ENCODE measurements at regions of chr5 and their contacts with region 1.

Region 1: DNA sequence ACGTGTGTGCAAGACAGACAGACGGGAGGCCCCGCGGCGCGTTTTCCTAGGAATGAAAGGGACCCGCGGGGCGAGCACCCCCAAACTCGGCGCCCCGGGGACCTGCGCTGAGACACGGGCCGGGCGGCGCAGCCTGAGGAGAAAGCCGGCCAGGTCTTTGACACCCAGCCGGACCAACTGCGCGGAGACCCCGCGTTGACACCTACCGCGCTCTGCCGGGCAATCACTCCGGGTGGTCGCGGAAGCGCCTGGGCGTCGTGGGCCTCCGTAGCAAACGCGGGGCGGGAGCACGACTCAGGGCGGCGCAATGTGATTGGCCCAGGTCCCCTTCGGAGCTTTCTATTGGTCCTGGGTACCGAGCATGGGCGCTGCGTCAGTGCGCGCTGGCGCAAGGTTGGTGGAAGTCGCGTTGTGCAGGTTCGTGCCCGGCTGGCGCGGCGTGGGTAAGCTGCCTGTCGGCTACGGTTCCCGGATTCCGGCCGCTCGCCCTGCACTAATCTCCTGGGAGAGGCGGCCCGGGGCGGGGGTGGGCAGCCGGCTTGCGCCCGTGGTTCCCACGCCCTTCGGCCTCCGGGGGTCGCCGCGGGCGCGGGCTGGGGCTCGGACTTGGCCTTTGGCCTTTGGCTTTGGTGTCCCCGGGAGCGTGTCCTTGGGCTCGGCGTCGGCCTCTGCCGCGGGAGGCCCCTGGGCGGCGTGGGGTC is at the starts of genes FASTKD3 and MTRR:
- DNase-seq: peak; percentile 86 to 93
- H3K4me3 ChIP-seq: peak within 1 kb of the TSS; percentile 88
- H3K4me1 ChIP-seq: peaks cover 15% of the 10 kb centered on the region
- H3K27me3 ChIP-seq: no peaks in the 10 kb centered on the region

Region 2: GRCh38 chr5:6615034-6615815 is 1253.7 kb before region 1 on chr5:
- in situ Hi-C with region 1: loop called (anchors 10 kb)
- DNase-seq: no peak
- H3K4me3 ChIP-seq: no peak overlapping the region
- H3K4me1 ChIP-seq: no peaks in the 10 kb centered on the region
- H3K27me3 ChIP-seq: no peaks in the 10 kb centered on the region

Region 3: GRCh38 chr5:6765612-6766525 is 1103.1 kb before region 1 on chr5:
- in situ Hi-C with region 1: loop called (anchors 25 kb)
- DNase-seq: peak; percentile 45 to 87
- H3K4me3 ChIP-seq: no peak overlapping the region
- H3K4me1 ChIP-seq: no peaks in the 10 kb centered on the region
- H3K27me3 ChIP-seq: no peaks in the 10 kb centered on the region

Region 4: GRCh38 chr5:7779019-7780005 is 89.6 kb before region 1 on chr5:
- in situ Hi-C with region 1: no loop called
- DNase-seq: no peak
- H3K4me3 ChIP-seq: no peak overlapping the region
- H3K4me1 ChIP-seq: no peaks in the 10 kb centered on the region
- H3K27me3 ChIP-seq: no peaks in the 10 kb centered on the region

Region 5: DNA sequence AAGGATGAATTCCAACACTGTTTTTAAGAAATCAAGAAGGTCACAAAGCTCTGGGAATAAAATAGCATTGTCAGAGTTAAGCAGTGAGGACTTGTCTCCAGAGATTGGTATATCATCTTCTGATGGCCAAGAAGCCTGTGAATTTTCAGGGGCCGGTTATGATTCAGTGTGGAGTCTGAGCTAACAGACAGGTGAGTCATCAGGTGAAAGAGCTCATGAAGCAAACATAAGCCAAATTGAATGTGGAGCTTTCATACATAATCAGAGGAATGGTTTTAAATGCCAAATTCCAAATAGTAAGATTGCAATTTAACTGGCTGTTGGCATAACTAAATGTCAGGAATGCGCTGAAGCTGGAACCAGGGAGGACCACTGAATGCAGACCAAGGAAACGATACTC is 494.2 kb after region 1 on chr5:
- in situ Hi-C with region 1: no loop called
- DNase-seq: no peak
- H3K4me3 ChIP-seq: no peak overlapping the region
- H3K4me1 ChIP-seq: no peaks in the 10 kb centered on the region
- H3K27me3 ChIP-seq: no peaks in the 10 kb centered on the region

Measured in HAP-1 (cell line).